Heart right ventricle (tissue), 16 donors: ENCODE measurements at regions of chr5 and their contacts with region 1.

Region 1: DNA sequence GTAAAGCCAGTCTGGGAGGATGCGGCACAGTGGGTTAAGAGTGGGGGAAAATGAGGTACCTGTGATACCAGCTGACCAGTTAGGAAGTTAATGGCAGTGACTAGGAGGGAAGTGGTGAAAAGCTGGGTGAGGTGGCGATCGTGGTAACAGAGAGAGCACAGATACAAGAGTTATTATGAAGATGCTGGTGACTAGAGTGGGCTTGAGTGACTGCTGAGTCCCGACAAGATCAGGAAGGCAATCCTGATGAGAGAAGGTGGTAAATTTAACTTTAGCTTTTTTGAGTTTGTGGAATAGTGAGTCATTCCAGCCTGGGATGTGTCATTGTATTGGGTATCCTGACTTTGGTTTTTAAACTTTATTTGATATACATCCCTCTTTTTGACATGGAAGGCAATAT is 38.8 kb downstream of the CMYA5 start:
- DNase-seq: no peak
- ATAC-seq: peak in 5 of 8 donors; percentile 4 to 23 (median 13)
- H3K4me3 ChIP-seq: no peak overlapping the region
- H3K27ac ChIP-seq: peak overlapping the region in 9 of 10 donors; percentile 47 to 78 (median 67)
- H3K4me1 ChIP-seq: peaks cover 0 to 38% (median 3%) of the 10 kb centered on the region in 9 donors
- H3K27me3 ChIP-seq: no peaks in the 10 kb centered on the region
- CTCF ChIP-seq: no peak

Region 2: GRCh38 chr5:79689541-79690466 is 38.6 kb before region 1 on chr5 and contains the start of gene CMYA5:
- intact Hi-C with region 1: loop called in 1 of 10 experiments (anchors 5 kb)
- DNase-seq: peak; percentile 63 to 67
- ATAC-seq: peak; percentile 69 to 89 (median 76)
- H3K4me3 ChIP-seq: peak within 1 kb of the TSS; percentile 46 to 68 (median 60)
- H3K27ac ChIP-seq: peak within 1 kb of the TSS; percentile 83 to 99 (median 90)
- H3K4me1 ChIP-seq: peaks cover 0 to 15% (median 2%) of the 10 kb centered on the region in 9 donors
- H3K27me3 ChIP-seq: no peaks in the 10 kb centered on the region
- CTCF ChIP-seq: no peak
- total RNA-seq, gene CMYA5: 771 to 1,721 (median 1,115) TPM

Region 3: GRCh38 chr5:79762929-79763328 is 34.5 kb after region 1 on chr5:
- intact Hi-C with region 1: no loop called
- DNase-seq: no peak
- ATAC-seq: peak in 6 of 8 donors; percentile 27 to 75 (median 49)
- H3K4me3 ChIP-seq: no peak overlapping the region
- H3K27ac ChIP-seq: no peak overlapping the region
- H3K4me1 ChIP-seq: peaks cover 0 to 11% (median 4%) of the 10 kb centered on the region in 9 donors
- H3K27me3 ChIP-seq: no peaks in the 10 kb centered on the region
- CTCF ChIP-seq: no peak